IMR-90 (cell line): ENCODE measurements at regions of chr12 and their contacts with region 1.

Region 1: GRCh38 chr12:92570056-92570753 is 132.6 kb upstream of the PLEKHG7 start:
- DNase-seq: peak; percentile 86
- ATAC-seq: peak; percentile 65
- H3K4me3 ChIP-seq: no peak overlapping the region
- H3K27ac ChIP-seq: no peak overlapping the region
- H3K4me1 ChIP-seq: no peaks in the 10 kb centered on the region
- H3K27me3 ChIP-seq: no peaks in the 10 kb centered on the region
- CTCF ChIP-seq: peak; percentile 77
- POLR2A ChIP-seq: no peak
- RAD21 ChIP-seq: peak; percentile 87

Region 2: GRCh38 chr12:91577586-91578539 is 992.3 kb before region 1 on chr12:
- CTCF ChIA-PET with region 1: no interaction called
- POLR2A ChIA-PET with region 1: no interaction called
- dilution Hi-C with region 1: no loop called
- in situ Hi-C with region 1: no loop called
- intact Hi-C with region 1: loop called (anchors 1 kb)
- DNase-seq: peak; percentile 35
- ATAC-seq: peak; percentile 74
- H3K4me3 ChIP-seq: peak overlapping the region; percentile 39; the same call in 1 of the 2 replicates
- H3K27ac ChIP-seq: no peak overlapping the region
- H3K4me1 ChIP-seq: no peaks in the 10 kb centered on the region
- H3K27me3 ChIP-seq: no peaks in the 10 kb centered on the region; the same call in 1 of the 2 replicates
- CTCF ChIP-seq: peak; percentile 59
- POLR2A ChIP-seq: no peak
- RAD21 ChIP-seq: peak; percentile 52

Region 3: GRCh38 chr12:92608151-92609091 is 38.2 kb after region 1 on chr12:
- CTCF ChIA-PET with region 1: no interaction called
- POLR2A ChIA-PET with region 1: no interaction called
- dilution Hi-C with region 1: no loop called
- in situ Hi-C with region 1: no loop called
- intact Hi-C with region 1: loop called (anchors 5 kb)
- DNase-seq: peak; percentile 67
- ATAC-seq: peak; percentile 82
- H3K4me3 ChIP-seq: no peak overlapping the region
- H3K27ac ChIP-seq: no peak overlapping the region
- H3K4me1 ChIP-seq: peaks cover 2% of the 10 kb centered on the region; the same call in 1 of the 2 replicates
- H3K27me3 ChIP-seq: no peaks in the 10 kb centered on the region
- CTCF ChIP-seq: peak; percentile 70
- POLR2A ChIP-seq: no peak
- RAD21 ChIP-seq: peak; percentile 72

Region 4: GRCh38 chr12:92649511-92650227 is 79.5 kb after region 1 on chr12:
- CTCF ChIA-PET with region 1: no interaction called
- POLR2A ChIA-PET with region 1: no interaction called
- dilution Hi-C with region 1: no loop called
- in situ Hi-C with region 1: no loop called
- intact Hi-C with region 1: loop called (anchors 1 kb)
- DNase-seq: peak; percentile 90
- ATAC-seq: peak; percentile 99
- H3K4me3 ChIP-seq: no peak overlapping the region
- H3K27ac ChIP-seq: no peak overlapping the region
- H3K4me1 ChIP-seq: no peaks in the 10 kb centered on the region
- H3K27me3 ChIP-seq: no peaks in the 10 kb centered on the region
- CTCF ChIP-seq: peak; percentile 85
- POLR2A ChIP-seq: no peak
- RAD21 ChIP-seq: peak; percentile 94